Activated naive CD4-positive, alpha-beta T cell treated with anti-CD3 and anti-CD28 coated beads for 36 hours (primary cell): ENCODE measurements at regions of chr14 and their contacts with region 1.

Region 1: GRCh38 chr14:97707603-97708002 is 910.4 kb downstream of the VRK1 start:
- DNase-seq: peak; percentile 47
- H3K4me3 Mint-ChIP-seq: no peak overlapping the region
- H3K27ac Mint-ChIP-seq: no peak overlapping the region
- H3K4me1 Mint-ChIP-seq: peaks cover 92% of the 10 kb centered on the region
- H3K27me3 Mint-ChIP-seq: no peaks in the 10 kb centered on the region

Region 2: DNA sequence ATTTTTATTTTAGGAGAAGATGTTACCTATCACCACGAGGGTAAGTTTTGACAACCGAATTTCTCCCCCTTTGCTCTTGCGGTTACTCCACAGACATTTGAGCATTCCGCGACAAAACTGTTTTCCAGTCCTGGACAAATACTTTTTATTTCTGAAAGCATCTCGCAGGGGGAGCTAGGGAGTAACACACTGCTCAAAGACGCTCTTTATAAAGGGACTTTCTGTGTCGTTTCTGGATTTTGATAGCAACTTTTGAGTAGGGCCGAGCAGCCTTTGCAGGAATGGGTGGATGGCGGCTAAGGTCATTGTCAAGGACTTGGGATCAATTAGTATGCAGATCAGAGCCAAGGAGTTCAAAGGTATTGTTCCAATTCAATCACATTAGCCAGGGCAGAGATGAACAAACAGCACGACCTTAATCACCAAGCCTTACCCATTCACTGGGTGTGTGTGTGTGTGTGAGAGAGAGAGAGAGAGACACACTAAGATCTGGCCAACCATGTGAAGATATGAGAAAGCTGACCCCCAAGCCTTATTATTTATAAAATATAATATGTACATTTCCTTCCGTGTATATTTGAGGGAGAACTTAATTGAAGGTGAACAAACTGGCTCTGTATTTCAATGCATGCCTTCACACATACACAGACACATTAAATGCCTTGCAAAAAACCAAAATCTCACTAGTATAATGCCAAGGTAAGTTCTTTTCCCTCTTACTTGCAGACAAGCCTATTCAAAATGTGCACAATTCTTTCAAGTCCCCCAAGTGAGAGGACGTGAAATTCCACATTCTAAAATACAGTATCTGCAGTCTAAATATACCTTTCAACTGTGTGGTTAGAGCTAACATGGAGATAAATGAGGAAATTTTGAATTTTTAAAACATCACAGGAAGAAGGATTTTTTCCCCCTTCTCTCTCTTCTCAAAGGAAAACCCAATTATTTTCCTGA is 296.7 kb before region 1 on chr14:
- CTCF ChIA-PET with region 1: no interaction called
- intact Hi-C with region 1: loop called (anchors 5 kb)
- DNase-seq: no peak
- H3K4me3 Mint-ChIP-seq: no peak overlapping the region
- H3K27ac Mint-ChIP-seq: no peak overlapping the region
- H3K4me1 Mint-ChIP-seq: peaks cover 29% of the 10 kb centered on the region
- H3K27me3 Mint-ChIP-seq: peaks cover 9% of the 10 kb centered on the region

Region 3: DNA sequence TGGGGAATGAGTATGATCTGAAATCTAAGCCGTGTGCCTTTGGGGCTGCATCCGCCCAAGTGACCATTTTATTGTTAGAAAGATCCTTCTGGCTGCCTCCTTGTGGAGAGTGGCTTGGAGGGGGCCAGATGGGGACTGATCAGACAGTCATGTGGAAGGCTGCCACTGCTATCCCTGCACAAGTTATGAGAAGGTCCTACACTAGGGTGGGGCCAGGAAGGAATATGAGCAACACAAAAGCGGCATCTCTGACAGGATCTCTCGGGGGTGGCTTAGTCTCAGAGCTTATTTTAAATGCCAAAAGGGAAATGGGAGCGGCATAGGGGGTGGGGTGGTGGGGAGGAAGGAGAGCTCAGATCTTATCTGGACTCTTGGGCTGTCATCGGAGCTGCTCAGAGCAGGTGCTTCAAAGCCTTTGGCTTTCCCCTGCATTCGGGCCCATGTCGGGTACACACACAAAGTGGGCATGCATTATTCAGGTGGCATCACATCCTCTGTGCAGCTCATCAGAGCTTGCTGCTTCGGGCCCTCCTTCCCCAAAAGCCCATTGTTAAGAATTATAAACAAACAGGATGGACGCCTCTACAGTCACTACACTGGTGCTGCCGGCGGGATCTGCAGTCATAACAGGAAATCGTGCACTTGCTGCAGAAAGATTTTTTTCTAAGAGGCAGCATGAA is 105.0 kb before region 1 on chr14:
- CTCF ChIA-PET with region 1: interaction called, 3 read pairs
- intact Hi-C with region 1: loop called (anchors 5 kb)
- DNase-seq: peak; percentile 80
- H3K4me3 Mint-ChIP-seq: no peak overlapping the region
- H3K27ac Mint-ChIP-seq: no peak overlapping the region
- H3K4me1 Mint-ChIP-seq: peaks cover 30% of the 10 kb centered on the region
- H3K27me3 Mint-ChIP-seq: no peaks in the 10 kb centered on the region

Region 4: GRCh38 chr14:97620066-97620465 is 87.5 kb before region 1 on chr14:
- CTCF ChIA-PET with region 1: no interaction called
- intact Hi-C with region 1: loop called (anchors 5 kb)
- DNase-seq: no peak
- H3K4me3 Mint-ChIP-seq: peak overlapping the region; percentile 72
- H3K27ac Mint-ChIP-seq: peak overlapping the region; percentile 76
- H3K4me1 Mint-ChIP-seq: peaks cover 46% of the 10 kb centered on the region
- H3K27me3 Mint-ChIP-seq: no peaks in the 10 kb centered on the region

Region 5: DNA sequence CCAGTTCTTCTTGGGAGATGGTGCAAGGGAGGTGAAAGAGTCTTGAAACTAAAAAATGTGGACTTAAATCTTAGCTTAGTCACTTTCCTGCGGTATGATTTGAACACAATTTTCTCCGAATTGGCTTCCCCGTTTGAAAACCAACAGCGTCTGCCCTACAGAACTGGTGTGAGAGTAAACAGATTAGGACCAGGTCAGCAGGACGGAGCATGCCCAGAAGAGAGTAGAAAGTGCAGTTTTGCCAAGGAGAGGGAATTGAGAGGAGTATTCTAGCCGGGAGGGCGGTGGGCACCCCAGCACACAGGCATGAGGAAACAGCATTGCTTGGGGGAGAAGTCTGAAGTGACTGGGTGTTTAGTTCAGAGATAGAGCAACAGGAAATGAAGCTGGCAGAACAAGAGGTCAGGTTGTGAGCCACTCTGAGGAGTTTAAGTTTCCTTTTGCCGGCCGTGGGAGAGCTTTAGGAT is 16.7 kb after region 1 on chr14:
- CTCF ChIA-PET with region 1: interaction called, 3 read pairs
- intact Hi-C with region 1: loop called (anchors 2 kb)
- DNase-seq: peak; percentile 64
- H3K4me3 Mint-ChIP-seq: peak overlapping the region; percentile 76
- H3K27ac Mint-ChIP-seq: peak overlapping the region; percentile 96
- H3K4me1 Mint-ChIP-seq: peaks cover 69% of the 10 kb centered on the region
- H3K27me3 Mint-ChIP-seq: no peaks in the 10 kb centered on the region

Region 6: GRCh38 chr14:97948841-97949240 is 241.2 kb after region 1 on chr14:
- CTCF ChIA-PET with region 1: no interaction called
- intact Hi-C with region 1: no loop called
- DNase-seq: no peak
- H3K4me3 Mint-ChIP-seq: no peak overlapping the region
- H3K27ac Mint-ChIP-seq: no peak overlapping the region
- H3K4me1 Mint-ChIP-seq: peaks cover 52% of the 10 kb centered on the region
- H3K27me3 Mint-ChIP-seq: no peaks in the 10 kb centered on the region

Region 7: GRCh38 chr14:98138666-98139065 is 431.1 kb after region 1 on chr14:
- CTCF ChIA-PET with region 1: no interaction called
- intact Hi-C with region 1: no loop called
- DNase-seq: peak; percentile 77
- H3K4me3 Mint-ChIP-seq: peak overlapping the region; percentile 71
- H3K27ac Mint-ChIP-seq: peak overlapping the region; percentile 98
- H3K4me1 Mint-ChIP-seq: peaks cover 81% of the 10 kb centered on the region
- H3K27me3 Mint-ChIP-seq: no peaks in the 10 kb centered on the region

Region 8: GRCh38 chr14:98154254-98154653 is 446.7 kb after region 1 on chr14:
- CTCF ChIA-PET with region 1: no interaction called
- intact Hi-C with region 1: no loop called
- DNase-seq: no peak
- H3K4me3 Mint-ChIP-seq: no peak overlapping the region
- H3K27ac Mint-ChIP-seq: no peak overlapping the region
- H3K4me1 Mint-ChIP-seq: peaks cover 67% of the 10 kb centered on the region
- H3K27me3 Mint-ChIP-seq: no peaks in the 10 kb centered on the region